CD8-positive, alpha-beta T cell (primary cell): ENCODE measurements at regions of chr10 and their contacts with region 1.

Region 1: GRCh38 chr10:47261121-47261520 is 38.9 kb upstream of the GDF10 start:
- DNase-seq: peak in 7 of 9 experiments; percentile 17 to 68 (median 46)
- ATAC-seq: peak; percentile 53
- H3K4me3 ChIP-seq: no peak overlapping the region
- H3K4me3 Mint-ChIP-seq: peak overlapping the region; percentile 23
- H3K27ac ChIP-seq: peak overlapping the region; percentile 18 to 75
- H3K27ac Mint-ChIP-seq: peak overlapping the region; percentile 95
- H3K4me1 ChIP-seq: peaks cover 88% of the 10 kb centered on the region
- H3K4me1 Mint-ChIP-seq: peaks cover 95% of the 10 kb centered on the region
- H3K27me3 ChIP-seq: no peaks in the 10 kb centered on the region
- H3K27me3 Mint-ChIP-seq: no peaks in the 10 kb centered on the region
- CTCF ChIP-seq: no peak

Region 2: GRCh38 chr10:47165711-47166524 is 95.2 kb before region 1 on chr10:
- CTCF ChIA-PET with region 1: no interaction called
- POLR2A ChIA-PET with region 1: interaction called, 7 read pairs
- intact Hi-C with region 1: loop called (anchors 5 kb)
- DNase-seq: peak in 8 of 9 experiments; percentile 34 to 79 (median 52)
- ATAC-seq: peak; percentile 85
- H3K4me3 ChIP-seq: peak overlapping the region; percentile 48 to 73
- H3K4me3 Mint-ChIP-seq: peak overlapping the region; percentile 85
- H3K27ac ChIP-seq: peak overlapping the region; percentile 74 to 79
- H3K27ac Mint-ChIP-seq: peak overlapping the region; percentile 98
- H3K4me1 ChIP-seq: peaks cover 23% of the 10 kb centered on the region
- H3K4me1 Mint-ChIP-seq: peaks cover 31% of the 10 kb centered on the region
- H3K27me3 ChIP-seq: no peaks in the 10 kb centered on the region
- H3K27me3 Mint-ChIP-seq: no peaks in the 10 kb centered on the region
- CTCF ChIP-seq: no peak

Region 3: DNA sequence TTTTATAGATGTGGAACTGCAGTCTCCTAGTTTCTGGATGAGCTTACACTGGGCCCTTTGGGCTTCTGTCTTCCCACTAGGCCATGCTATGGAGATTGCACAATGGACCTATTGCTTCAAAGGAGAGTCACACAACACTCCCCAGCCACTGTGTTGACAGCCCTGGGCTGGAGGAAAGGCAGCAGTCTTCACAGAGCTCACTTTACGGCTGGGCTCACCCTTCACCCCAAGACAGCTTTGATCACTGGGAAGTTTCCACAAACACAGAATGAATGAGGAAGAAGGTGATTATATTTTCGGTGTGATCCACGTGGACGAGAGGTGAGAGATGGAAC is 53.9 kb before region 1 on chr10:
- CTCF ChIA-PET with region 1: interaction called, 3 read pairs
- POLR2A ChIA-PET with region 1: no interaction called
- intact Hi-C with region 1: loop called in 1 of 2 experiments (anchors 2 kb)
- DNase-seq: peak in 2 of 9 experiments; percentile 25 to 48
- ATAC-seq: peak; percentile 52
- H3K4me3 ChIP-seq: peak overlapping the region in 1 of 2 experiments; percentile 20
- H3K4me3 Mint-ChIP-seq: peak overlapping the region; percentile 65
- H3K27ac ChIP-seq: peak overlapping the region; percentile 22 to 62
- H3K27ac Mint-ChIP-seq: peak overlapping the region; percentile 88
- H3K4me1 ChIP-seq: peaks cover 43% of the 10 kb centered on the region
- H3K4me1 Mint-ChIP-seq: peaks cover 65% of the 10 kb centered on the region
- H3K27me3 ChIP-seq: no peaks in the 10 kb centered on the region
- H3K27me3 Mint-ChIP-seq: no peaks in the 10 kb centered on the region
- CTCF ChIP-seq: no peak

Region 4: GRCh38 chr10:47230482-47230881 is 30.6 kb before region 1 on chr10:
- CTCF ChIA-PET with region 1: no interaction called
- POLR2A ChIA-PET with region 1: no interaction called
- intact Hi-C with region 1: loop called in 1 of 2 experiments (anchors 2 kb)
- DNase-seq: peak in 1 of 9 experiments; percentile 47
- ATAC-seq: no peak
- H3K4me3 ChIP-seq: no peak overlapping the region
- H3K4me3 Mint-ChIP-seq: peak overlapping the region; percentile 44
- H3K27ac ChIP-seq: no peak overlapping the region
- H3K27ac Mint-ChIP-seq: peak overlapping the region; percentile 78
- H3K4me1 ChIP-seq: peaks cover 10% of the 10 kb centered on the region
- H3K4me1 Mint-ChIP-seq: peaks cover 20% of the 10 kb centered on the region
- H3K27me3 ChIP-seq: no peaks in the 10 kb centered on the region
- H3K27me3 Mint-ChIP-seq: no peaks in the 10 kb centered on the region
- CTCF ChIP-seq: no peak

Region 5: GRCh38 chr10:47277352-47278151 is 16.4 kb after region 1 on chr10:
- CTCF ChIA-PET with region 1: interaction called, 4 read pairs
- POLR2A ChIA-PET with region 1: interaction called, 4 read pairs
- intact Hi-C with region 1: loop called in 1 of 2 experiments (anchors 1 kb)
- DNase-seq: peak in 8 of 9 experiments; percentile 38 to 76 (median 52)
- ATAC-seq: peak; percentile 91
- H3K4me3 ChIP-seq: no peak overlapping the region
- H3K4me3 Mint-ChIP-seq: peak overlapping the region; percentile 37
- H3K27ac ChIP-seq: no peak overlapping the region
- H3K27ac Mint-ChIP-seq: peak overlapping the region; percentile 76
- H3K4me1 ChIP-seq: peaks cover 25% of the 10 kb centered on the region
- H3K4me1 Mint-ChIP-seq: peaks cover 36% of the 10 kb centered on the region
- H3K27me3 ChIP-seq: no peaks in the 10 kb centered on the region
- H3K27me3 Mint-ChIP-seq: no peaks in the 10 kb centered on the region
- CTCF ChIP-seq: no peak

Region 6: DNA sequence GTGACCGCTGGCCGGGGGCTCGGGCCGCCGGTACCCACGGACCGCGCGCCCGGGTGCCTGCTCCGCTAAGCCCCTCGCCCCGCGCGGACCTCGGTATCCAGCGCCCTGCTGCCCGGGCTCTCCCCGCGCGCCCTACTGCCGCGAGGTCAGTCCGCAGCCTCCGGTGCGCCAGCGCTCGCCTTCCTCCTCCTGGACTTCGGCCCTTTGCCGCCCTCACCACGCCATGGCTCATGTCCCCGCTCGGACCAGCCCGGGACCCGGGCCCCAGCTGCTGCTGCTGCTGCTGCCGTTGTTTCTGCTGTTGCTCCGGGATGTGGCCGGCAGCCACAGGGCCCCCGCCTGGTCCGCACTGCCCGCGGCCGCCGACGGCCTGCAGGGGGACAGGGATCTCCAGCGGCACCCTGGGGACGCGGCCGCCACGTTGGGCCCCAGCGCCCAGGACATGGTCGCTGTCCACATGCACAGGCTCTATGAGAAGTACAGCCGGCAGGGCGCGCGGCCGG is 39.4 kb after region 1 on chr10:
- CTCF ChIA-PET with region 1: no interaction called
- POLR2A ChIA-PET with region 1: no interaction called
- intact Hi-C with region 1: loop called in 1 of 2 experiments (anchors 5 kb)
- DNase-seq: no peak
- ATAC-seq: peak; percentile 16
- H3K4me3 ChIP-seq: peak overlapping the region; percentile 20 to 56
- H3K4me3 Mint-ChIP-seq: peak overlapping the region; percentile 85
- H3K27ac ChIP-seq: no peak overlapping the region
- H3K27ac Mint-ChIP-seq: no peak overlapping the region
- H3K4me1 ChIP-seq: peaks cover 14% of the 10 kb centered on the region
- H3K4me1 Mint-ChIP-seq: peaks cover 27% of the 10 kb centered on the region
- H3K27me3 ChIP-seq: peaks cover 0 to 2% of the 10 kb centered on the region in 2 experiments
- H3K27me3 Mint-ChIP-seq: peaks cover 8% of the 10 kb centered on the region
- CTCF ChIP-seq: no peak